Lower lobe of right lung (tissue), 2 donors: ENCODE measurements at regions of chr5 and their contacts with region 1.

Region 1: GRCh38 chr5:36870399-36871040 is 6.0 kb upstream of the NIPBL start:
- DNase-seq: no peak
- ATAC-seq: peak; percentile 84
- H3K4me3 ChIP-seq: no peak overlapping the region
- H3K27ac ChIP-seq: no peak overlapping the region
- H3K4me1 ChIP-seq: peaks cover 16% of the 10 kb centered on the region
- H3K27me3 ChIP-seq: no peaks in the 10 kb centered on the region
- CTCF ChIP-seq: peak; percentile 69

Region 2: GRCh38 chr5:36739751-36740221 is 130.7 kb before region 1 on chr5:
- intact Hi-C with region 1: loop called (anchors 5 kb)
- DNase-seq: peak; percentile 78
- ATAC-seq: peak; percentile 77 to 83
- H3K4me3 ChIP-seq: no peak overlapping the region
- H3K27ac ChIP-seq: no peak overlapping the region
- H3K4me1 ChIP-seq: peaks cover 32% of the 10 kb centered on the region
- H3K27me3 ChIP-seq: no peaks in the 10 kb centered on the region
- CTCF ChIP-seq: peak; percentile 74

Region 3: DNA sequence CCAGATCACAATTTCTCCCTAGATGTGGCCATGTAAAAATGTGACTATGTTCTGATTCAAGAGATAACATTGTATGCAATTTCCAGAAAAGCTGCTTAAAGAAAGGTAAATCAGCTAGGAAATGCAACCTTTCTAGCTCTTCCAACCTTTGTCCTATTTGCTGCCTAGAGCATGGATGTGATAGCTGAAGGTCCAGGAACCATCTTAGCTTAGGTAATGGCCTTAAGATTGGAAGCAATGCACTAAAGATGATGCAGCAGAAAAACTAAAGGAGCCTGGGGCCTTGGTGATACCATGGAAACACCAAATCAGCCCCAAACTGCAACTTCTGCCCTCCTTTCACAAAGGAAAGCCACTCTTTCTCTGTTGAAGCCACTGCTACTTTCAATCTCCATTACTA is 351.7 kb after region 1 on chr5:
- intact Hi-C with region 1: no loop called
- DNase-seq: no peak
- ATAC-seq: no peak
- H3K4me3 ChIP-seq: no peak overlapping the region
- H3K27ac ChIP-seq: no peak overlapping the region
- H3K4me1 ChIP-seq: no peaks in the 10 kb centered on the region
- H3K27me3 ChIP-seq: no peaks in the 10 kb centered on the region
- CTCF ChIP-seq: no peak